Astrocyte of the cerebellum (primary cell): ENCODE measurements at regions of chr13 and their contacts with region 1.

Region 1: GRCh38 chr13:109465156-109465555 is 321.2 kb downstream of the IRS2 start:
- DNase-seq: no peak
- H3K4me3 ChIP-seq: no peak overlapping the region
- CTCF ChIP-seq: no peak

Region 2: DNA sequence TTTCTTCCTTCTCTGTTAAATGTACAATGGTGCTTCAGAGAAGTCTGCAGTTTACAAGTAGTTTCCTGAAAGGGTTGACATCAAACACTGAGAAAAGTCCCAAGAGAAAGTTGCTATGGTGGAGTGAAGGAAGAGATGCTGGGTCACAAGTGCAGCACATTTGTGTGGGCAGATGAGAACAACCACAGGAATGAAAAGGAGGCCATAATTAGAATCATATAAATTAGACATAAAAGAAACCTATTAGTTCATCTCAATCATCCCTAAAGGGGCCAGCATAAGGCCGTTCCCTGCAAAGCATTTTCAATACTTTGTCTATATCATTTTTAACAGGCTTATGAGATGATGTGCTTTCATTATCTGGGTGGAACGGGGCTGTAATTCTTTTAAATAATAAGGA is 38.0 kb before region 1 on chr13:
- in situ Hi-C with region 1: loop called (anchors 5 kb)
- DNase-seq: peak; percentile 20
- H3K4me3 ChIP-seq: no peak overlapping the region
- CTCF ChIP-seq: no peak